Activated CD4-positive, alpha-beta T cell treated with anti-CD3 and anti-CD28 coated beads, Interleukin-2, amount 10 ng/mL, durations not matched to agents 24 days and 14 days (primary cell): ENCODE measurements at regions of chr12 and their contacts with region 1.

Region 1: DNA sequence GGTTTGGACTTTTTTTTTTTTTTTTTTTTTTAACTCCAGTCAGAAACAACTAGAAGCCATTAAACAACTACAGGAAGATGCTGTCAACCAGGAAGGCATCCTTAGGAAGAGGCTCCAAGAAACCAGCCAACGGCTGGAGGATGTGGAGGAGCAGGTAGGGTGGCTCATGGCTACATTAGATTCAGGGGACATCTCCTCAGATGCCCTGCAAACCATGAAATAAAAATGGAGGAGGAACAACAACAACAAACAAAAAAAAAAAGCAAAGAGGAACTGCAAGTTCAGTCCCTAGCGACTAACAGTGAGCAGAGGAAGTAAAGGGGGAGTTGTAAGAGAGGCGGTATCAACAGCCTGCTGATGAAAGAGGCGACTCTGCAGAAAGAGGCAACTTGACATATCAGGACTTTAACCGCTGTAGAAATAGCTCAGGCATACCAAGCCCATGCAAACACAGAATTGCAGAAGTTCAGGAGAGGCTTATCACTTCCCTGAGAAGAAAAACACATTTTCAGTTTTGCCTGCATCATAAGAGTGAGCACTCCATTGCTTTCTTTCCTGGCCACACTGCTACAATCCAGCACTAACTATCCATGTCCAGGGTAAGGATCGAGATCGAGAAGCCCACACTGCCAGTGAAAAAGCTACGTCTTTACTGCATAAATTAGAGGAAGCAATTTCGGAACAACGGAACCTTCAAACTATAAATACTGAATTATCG is 103.5 kb upstream of the BCAT1 start:
- DNase-seq: peak; percentile 87
- H3K4me3 Mint-ChIP-seq: peak overlapping the region; percentile 93
- H3K27ac Mint-ChIP-seq: peak overlapping the region; percentile 99
- H3K4me1 Mint-ChIP-seq: peaks cover 45% of the 10 kb centered on the region
- H3K27me3 Mint-ChIP-seq: peaks cover 3% of the 10 kb centered on the region

Region 2: GRCh38 chr12:24902511-24903328 is 149.6 kb before region 1 on chr12:
- intact Hi-C with region 1: loop called (anchors 2 kb)
- DNase-seq: peak; percentile 85
- H3K4me3 Mint-ChIP-seq: peak overlapping the region; percentile 98
- H3K27ac Mint-ChIP-seq: peak overlapping the region; percentile 98
- H3K4me1 Mint-ChIP-seq: peaks cover 35% of the 10 kb centered on the region
- H3K27me3 Mint-ChIP-seq: peaks cover 4% of the 10 kb centered on the region

Region 3: GRCh38 chr12:24991209-24992049 is 60.9 kb before region 1 on chr12:
- intact Hi-C with region 1: loop called (anchors 5 kb)
- DNase-seq: peak; percentile 73
- H3K4me3 Mint-ChIP-seq: no peak overlapping the region
- H3K27ac Mint-ChIP-seq: no peak overlapping the region
- H3K4me1 Mint-ChIP-seq: no peaks in the 10 kb centered on the region
- H3K27me3 Mint-ChIP-seq: peaks cover 8% of the 10 kb centered on the region

Region 4: GRCh38 chr12:25089738-25090137 is 37.4 kb after region 1 on chr12:
- intact Hi-C with region 1: loop called (anchors 2 kb)
- DNase-seq: no peak
- H3K4me3 Mint-ChIP-seq: no peak overlapping the region
- H3K27ac Mint-ChIP-seq: peak overlapping the region; percentile 0
- H3K4me1 Mint-ChIP-seq: peaks cover 5% of the 10 kb centered on the region
- H3K27me3 Mint-ChIP-seq: no peaks in the 10 kb centered on the region

Region 5: DNA sequence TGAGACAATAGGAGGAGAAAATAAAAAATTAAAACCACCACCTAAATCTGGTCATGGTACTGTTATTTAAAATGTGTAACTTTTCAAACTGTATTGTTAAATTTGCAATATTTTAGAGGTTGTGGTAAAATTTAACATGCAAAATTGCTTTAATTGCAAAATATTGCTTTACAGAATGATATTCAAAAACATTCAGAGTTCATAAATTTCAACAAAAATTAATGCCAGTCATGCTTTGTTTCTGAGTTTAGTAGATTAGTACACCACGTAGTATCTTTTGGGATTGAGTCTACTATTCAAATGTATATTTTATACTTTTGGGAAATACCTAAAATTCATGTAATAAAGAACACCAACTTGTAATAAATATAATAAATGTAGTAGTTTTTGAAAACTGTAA is 161.0 kb after region 1 on chr12:
- intact Hi-C with region 1: no loop called
- DNase-seq: no peak
- H3K4me3 Mint-ChIP-seq: no peak overlapping the region
- H3K27ac Mint-ChIP-seq: no peak overlapping the region
- H3K4me1 Mint-ChIP-seq: peaks cover 2% of the 10 kb centered on the region
- H3K27me3 Mint-ChIP-seq: no peaks in the 10 kb centered on the region

Region 6: DNA sequence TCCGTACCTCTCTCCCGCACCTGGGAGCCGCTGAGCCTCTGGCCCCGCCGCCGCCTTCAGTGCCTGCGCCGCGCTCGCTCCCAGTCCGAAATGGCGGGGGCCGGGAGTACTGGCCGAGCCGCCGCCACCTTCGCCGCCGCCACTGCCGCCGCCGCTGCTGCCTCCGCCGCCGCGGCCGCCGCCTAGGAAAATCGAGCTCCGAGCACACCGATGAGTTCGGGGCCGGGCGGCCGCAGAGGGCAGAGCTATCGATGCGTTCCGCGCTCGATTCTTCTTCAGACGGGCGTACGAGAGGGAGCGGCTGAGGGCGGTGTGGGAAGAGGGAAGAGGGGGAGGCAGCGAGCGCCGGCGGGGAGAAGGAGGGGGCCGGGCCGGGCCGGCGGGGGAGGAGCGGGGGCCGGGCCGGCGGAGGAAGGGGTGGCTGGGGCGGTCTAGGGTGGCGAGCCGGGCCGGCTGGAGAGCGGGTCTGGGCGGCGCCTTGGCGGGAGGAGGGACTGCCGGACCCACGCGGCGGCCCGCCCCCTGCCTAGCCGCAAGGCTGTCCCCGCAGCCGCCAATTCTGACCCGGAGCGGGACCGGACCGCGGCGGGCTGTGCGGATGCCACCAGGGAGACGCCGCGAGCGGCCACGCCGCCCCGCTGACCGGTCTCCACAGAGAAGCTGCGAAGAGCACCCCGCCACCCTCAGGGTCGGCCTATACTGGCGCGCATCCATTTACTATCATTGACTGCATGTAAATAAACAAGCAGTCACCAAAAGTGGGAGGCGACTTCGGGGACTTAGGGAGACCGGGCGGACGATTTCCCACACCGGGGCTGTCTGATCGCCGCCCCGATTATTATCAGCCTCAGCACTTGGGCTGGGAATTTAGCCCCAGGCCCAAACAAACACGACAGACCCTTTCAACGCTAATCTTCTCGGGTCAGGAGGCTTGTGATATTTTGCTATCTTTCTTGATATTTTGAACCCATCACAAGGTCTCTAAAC is 198.7 kb after region 1 on chr12 and contains the start of gene KRAS:
- intact Hi-C with region 1: loop called (anchors 5 kb)
- DNase-seq: peak; percentile 97
- H3K4me3 Mint-ChIP-seq: peak within 1 kb of the TSS; percentile 86
- H3K27ac Mint-ChIP-seq: peak within 1 kb of the TSS; percentile 94
- H3K4me1 Mint-ChIP-seq: peaks cover 27% of the 10 kb centered on the region
- H3K27me3 Mint-ChIP-seq: peaks cover 13% of the 10 kb centered on the region
- total RNA-seq, gene KRAS: 26.4 and 27.4 TPM in 2 replicates

Region 7: DNA sequence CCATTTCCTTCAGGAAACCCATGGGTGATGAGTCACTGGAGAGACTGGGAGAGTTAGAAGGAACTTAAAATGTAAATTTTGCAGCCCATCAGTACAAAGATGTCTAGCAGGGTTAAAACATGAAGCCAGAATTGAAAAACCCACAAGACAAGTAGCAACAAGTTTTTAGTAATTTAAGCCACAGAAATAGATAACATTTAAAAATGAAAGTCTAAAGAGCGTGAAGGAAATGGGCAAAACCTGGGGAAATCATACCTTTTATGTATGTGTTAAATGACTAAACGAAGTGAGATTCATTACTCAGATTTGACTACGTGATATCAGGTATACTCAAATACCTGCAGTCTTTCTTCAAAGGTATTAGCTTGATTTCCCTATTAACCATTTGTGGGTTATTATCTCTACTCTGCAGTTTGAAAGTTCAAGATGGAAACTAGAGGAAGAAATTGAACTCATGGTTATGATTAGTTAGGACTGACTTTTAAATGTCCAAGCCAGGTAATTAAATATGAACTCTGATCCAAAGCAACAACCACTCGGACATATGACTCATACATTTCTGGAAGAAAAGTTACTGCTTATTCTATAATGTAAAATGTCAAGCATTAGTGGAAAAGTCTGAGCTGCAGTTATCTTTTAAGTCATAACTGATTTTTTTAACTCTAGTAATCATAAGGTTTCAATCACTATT is 1696.5 kb after region 1 on chr12:
- intact Hi-C with region 1: loop called (anchors 2 kb)
- DNase-seq: no peak
- H3K4me3 Mint-ChIP-seq: peak overlapping the region; percentile 51
- H3K27ac Mint-ChIP-seq: peak overlapping the region; percentile 75
- H3K4me1 Mint-ChIP-seq: peaks cover 50% of the 10 kb centered on the region
- H3K27me3 Mint-ChIP-seq: no peaks in the 10 kb centered on the region